GM12878 (cell line): ENCODE measurements at regions of chr3 and their contacts with region 1.

Region 1: DNA sequence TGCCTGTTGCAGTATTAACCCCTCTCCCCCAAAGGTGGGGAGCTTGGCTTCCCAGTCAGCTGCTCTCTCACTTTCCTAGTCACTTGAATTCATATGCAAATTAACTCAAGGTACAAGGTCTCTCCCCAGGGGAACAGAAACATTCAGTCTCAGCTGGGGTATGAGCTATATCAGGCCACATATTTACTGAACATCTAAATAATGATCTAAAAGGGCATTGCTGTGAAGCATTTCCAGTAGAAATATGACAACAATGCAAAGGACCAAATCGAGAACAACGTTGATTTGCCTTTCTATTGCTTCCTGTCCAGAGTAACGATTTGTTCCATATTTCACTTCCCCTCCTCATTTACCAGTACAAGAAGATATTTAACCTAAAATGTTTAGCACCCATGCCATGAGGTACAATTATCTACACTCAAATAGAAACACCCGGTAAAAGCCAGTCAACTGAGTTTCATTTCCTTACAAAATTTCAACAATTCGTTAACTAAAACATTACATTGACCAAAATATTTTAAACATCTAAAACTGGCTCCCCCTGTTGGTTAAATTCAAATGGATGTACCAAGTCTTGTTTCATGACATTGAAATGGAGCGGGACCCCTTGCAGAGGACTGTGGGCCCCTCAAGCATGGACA is 36.5 kb upstream of the KLHL6 start:
- DNase-seq: peak; percentile 96
- ATAC-seq: peak; percentile 89
- H3K4me3 ChIP-seq: no peak overlapping the region; the same call in 1 of the 2 replicates
- H3K27ac ChIP-seq: no peak overlapping the region
- H3K4me1 ChIP-seq: peaks cover 22% of the 10 kb centered on the region
- H3K27me3 ChIP-seq: peaks cover 0 to 16% of the 10 kb centered on the region in 2 experiments; a peak in 1 of 4 replicates
- CTCF ChIP-seq: peak; percentile 23 to 48 (median 37); a peak in 4 of 6 replicates
- EP300 ChIP-seq: peak; percentile 27 to 84; a peak in 3 of 4 replicates
- POLR2A ChIP-seq: no peak
- RAD21 ChIP-seq: peak; percentile 41; the same call in 1 of the 2 replicates

Region 2: GRCh38 chr3:183481582-183481981 is 110.4 kb before region 1 on chr3:
- CTCF ChIA-PET with region 1: interaction called, 8 read pairs
- POLR2A ChIA-PET with region 1: no interaction called
- RAD21 ChIA-PET with region 1: interaction called, 4 read pairs
- SMC1A ChIA-PET with region 1: interaction called, 9 read pairs
- in situ Hi-C with region 1: no loop called
- intact Hi-C with region 1: loop called (anchors 5 kb)
- DNase-seq: no peak
- ATAC-seq: peak; percentile 6; the same call in 2 of the 3 replicates
- H3K4me3 ChIP-seq: no peak overlapping the region
- H3K27ac ChIP-seq: no peak overlapping the region
- H3K4me1 ChIP-seq: no peaks in the 10 kb centered on the region
- H3K27me3 ChIP-seq: no peaks in the 10 kb centered on the region
- CTCF ChIP-seq: no peak
- EP300 ChIP-seq: no peak
- POLR2A ChIP-seq: no peak
- RAD21 ChIP-seq: no peak

Region 3: DNA sequence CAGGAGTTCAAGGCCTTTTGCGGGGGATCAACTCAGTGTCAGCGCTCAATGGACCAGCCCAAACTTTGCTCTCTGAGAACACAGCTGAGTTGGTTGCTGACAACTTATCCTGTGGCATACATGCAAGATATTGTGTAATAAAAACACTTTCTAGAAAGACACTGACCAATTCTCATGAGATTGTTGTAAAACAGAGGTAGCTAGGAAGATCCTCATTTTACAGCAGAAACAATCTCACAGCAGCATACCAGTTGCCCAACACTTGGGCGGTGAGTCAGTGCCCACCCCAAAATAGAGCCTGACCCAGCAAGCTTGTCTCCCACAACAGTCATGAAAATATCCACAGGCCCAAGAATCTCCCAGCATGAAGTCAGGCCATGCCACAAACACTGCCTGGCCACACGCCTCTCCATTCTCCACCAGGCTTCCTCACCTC is 54.7 kb before region 1 on chr3:
- CTCF ChIA-PET with region 1: interaction called, 36 read pairs
- POLR2A ChIA-PET with region 1: interaction called, 15 read pairs
- RAD21 ChIA-PET with region 1: interaction called, 44 read pairs
- SMC1A ChIA-PET with region 1: interaction called, 12 read pairs
- in situ Hi-C with region 1: no loop called
- intact Hi-C with region 1: no loop called
- DNase-seq: no peak
- ATAC-seq: no peak
- H3K4me3 ChIP-seq: no peak overlapping the region
- H3K27ac ChIP-seq: no peak overlapping the region
- H3K4me1 ChIP-seq: peaks cover 75% of the 10 kb centered on the region
- H3K27me3 ChIP-seq: no peaks in the 10 kb centered on the region
- CTCF ChIP-seq: no peak
- EP300 ChIP-seq: no peak
- POLR2A ChIP-seq: no peak
- RAD21 ChIP-seq: no peak

Region 4: GRCh38 chr3:183564046-183564445 is 28.0 kb before region 1 on chr3:
- CTCF ChIA-PET with region 1: interaction called, 22 read pairs
- POLR2A ChIA-PET with region 1: interaction called, 6 read pairs
- RAD21 ChIA-PET with region 1: interaction called, 12 read pairs
- SMC1A ChIA-PET with region 1: interaction called, 27 read pairs
- in situ Hi-C with region 1: no loop called
- intact Hi-C with region 1: no loop called
- DNase-seq: no peak
- ATAC-seq: peak; percentile 20
- H3K4me3 ChIP-seq: no peak overlapping the region
- H3K27ac ChIP-seq: no peak overlapping the region
- H3K4me1 ChIP-seq: no peaks in the 10 kb centered on the region; the same call in 1 of the 2 replicates
- H3K27me3 ChIP-seq: no peaks in the 10 kb centered on the region
- CTCF ChIP-seq: no peak
- EP300 ChIP-seq: no peak
- POLR2A ChIP-seq: no peak
- RAD21 ChIP-seq: no peak

Region 5: DNA sequence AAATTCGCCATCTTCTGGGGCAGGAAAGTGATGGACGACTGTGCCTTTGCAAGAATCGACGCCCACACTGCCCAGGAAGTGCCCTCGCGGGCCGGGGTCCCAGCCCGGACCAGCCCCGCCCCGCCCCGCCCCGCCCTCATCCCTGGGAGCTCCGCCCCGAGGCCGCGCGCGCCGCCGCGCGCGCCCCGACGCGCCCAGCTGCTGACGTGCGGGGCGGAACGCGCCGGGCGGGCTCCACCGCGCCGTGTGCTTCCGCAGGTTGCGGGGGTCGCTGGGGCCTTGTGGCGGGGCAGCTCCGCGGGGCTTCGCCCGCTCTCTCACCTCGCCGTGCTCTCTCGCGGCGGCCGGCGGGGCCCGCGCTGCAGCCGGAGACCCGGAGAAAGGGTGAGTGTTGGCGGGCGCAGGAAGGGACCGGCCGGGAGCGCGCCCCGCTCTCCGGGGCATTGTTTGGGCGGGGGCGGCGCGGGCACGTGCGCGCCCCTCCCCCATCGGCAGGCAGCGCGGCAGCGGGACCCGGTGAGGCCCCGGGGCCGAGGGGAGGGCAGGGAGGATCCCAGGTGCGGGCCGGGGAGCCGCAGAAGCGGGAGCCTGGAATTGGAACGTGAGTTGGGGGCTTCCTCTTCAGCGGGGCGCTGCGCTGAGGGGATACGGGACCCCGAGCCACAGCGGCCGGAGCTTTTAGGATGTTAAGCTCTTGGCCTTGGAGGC is 105.8 kb after region 1 on chr3 and contains the start of gene YEATS2:
- CTCF ChIA-PET with region 1: interaction called, 6 read pairs
- POLR2A ChIA-PET with region 1: interaction called, 4 read pairs
- RAD21 ChIA-PET with region 1: interaction called, 9 read pairs
- SMC1A ChIA-PET with region 1: interaction called, 4 read pairs
- in situ Hi-C with region 1: no loop called
- intact Hi-C with region 1: loop called (anchors 5 kb)
- DNase-seq: no peak
- ATAC-seq: peak; percentile 82
- H3K4me3 ChIP-seq: peak within 1 kb of the TSS; percentile 99
- H3K27ac ChIP-seq: peak within 1 kb of the TSS; percentile 91
- H3K4me1 ChIP-seq: no peaks in the 10 kb centered on the region
- H3K27me3 ChIP-seq: no peaks in the 10 kb centered on the region
- CTCF ChIP-seq: no peak
- EP300 ChIP-seq: no peak
- POLR2A ChIP-seq: peak; percentile 81
- RAD21 ChIP-seq: no peak
- polyA plus RNA-seq, gene YEATS2: 1.9 to 3.8 TPM

Region 6: GRCh38 chr3:183895296-183895695 is 303.3 kb after region 1 on chr3:
- CTCF ChIA-PET with region 1: no interaction called
- POLR2A ChIA-PET with region 1: no interaction called
- RAD21 ChIA-PET with region 1: no interaction called
- SMC1A ChIA-PET with region 1: no interaction called
- in situ Hi-C with region 1: no loop called
- intact Hi-C with region 1: no loop called
- DNase-seq: no peak
- ATAC-seq: peak; percentile 85
- H3K4me3 ChIP-seq: no peak overlapping the region
- H3K27ac ChIP-seq: no peak overlapping the region
- H3K4me1 ChIP-seq: peaks cover 8% of the 10 kb centered on the region; the same call in 1 of the 2 replicates
- H3K27me3 ChIP-seq: no peaks in the 10 kb centered on the region
- CTCF ChIP-seq: peak; percentile 79 to 91 (median 89)
- EP300 ChIP-seq: no peak
- POLR2A ChIP-seq: no peak
- RAD21 ChIP-seq: peak; percentile 98